Activated naive CD4-positive, alpha-beta T cell treated with anti-CD3 and anti-CD28 coated beads, Interleukin-2, amount 10 ng/mL, durations not matched to agents 7 days and 5 days (primary cell): ENCODE measurements at regions of chr12 and their contacts with region 1.

Region 1: DNA sequence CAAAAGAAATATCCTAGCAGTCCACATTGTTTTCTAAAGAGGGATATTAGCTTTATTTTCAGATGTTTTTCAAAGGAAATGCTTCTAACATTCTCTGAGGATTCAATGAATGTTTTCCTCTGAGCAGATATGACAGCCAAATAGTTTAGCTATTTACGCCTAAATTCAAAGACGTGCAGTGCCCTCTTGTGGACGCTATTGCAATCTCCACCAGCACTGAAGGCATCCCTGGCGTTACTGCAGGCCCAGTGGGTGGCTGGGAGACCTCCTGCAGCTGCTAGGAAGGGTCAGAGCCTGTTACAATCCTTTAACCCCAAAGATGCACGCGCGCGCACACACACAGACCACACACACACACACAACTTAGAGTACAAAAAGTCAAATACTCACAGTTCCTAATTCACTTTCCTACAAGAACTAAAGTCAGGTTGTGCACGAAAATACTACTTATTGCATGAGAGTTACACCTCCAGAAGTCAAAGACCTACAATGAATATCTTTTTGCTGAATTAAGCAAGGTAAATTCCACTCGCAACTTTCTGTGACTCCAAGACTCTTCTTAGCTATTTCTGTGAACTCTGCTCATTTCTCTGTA is 589.3 kb upstream of the TMEM132C start:
- DNase-seq: peak; percentile 69
- H3K4me3 Mint-ChIP-seq: no peak overlapping the region
- H3K27ac Mint-ChIP-seq: no peak overlapping the region
- H3K4me1 Mint-ChIP-seq: no peaks in the 10 kb centered on the region
- H3K27me3 Mint-ChIP-seq: no peaks in the 10 kb centered on the region

Region 2: DNA sequence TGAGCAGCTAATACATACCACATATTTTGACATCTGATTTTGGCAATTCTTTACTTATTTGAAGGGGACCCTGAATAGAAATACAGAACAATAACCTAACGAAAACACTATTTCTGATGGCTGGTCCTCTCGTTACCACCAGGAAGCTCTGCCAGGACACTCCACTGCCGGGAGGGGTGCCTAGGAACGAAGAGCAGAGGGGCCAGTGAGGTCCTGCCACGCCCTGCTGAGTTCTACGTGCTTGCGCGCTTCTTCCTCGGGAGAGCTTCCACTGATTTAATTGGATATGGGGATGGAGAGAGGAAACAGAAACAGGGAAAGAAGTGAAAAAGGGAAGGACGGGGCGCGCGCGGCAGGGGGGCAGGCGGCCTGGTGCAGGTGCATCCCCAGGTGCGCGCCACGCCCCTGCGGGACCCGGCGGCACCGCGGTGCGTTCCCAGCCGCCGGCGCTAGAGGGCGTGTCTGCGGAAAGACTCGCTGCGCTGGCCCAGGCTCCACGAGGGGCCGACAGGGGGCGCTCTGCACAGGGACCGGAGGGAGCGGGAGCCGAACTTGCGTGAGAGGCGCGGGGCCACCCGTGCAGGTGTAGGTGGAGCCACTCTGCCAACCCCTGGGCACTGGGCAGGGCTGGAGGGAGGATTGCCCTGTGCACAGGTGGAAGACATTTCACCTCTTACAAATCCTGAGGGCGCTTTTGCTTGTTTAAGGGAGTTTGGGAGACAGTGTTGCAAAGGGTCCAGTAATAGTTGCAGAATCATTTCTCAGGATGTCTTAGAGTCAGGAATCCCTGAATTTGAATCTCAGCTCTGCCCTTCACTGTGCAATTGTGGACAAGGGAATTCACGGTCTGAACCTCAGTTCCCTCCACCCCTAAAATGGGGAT is 397.0 kb before region 1 on chr12:
- CTCF ChIA-PET with region 1: interaction called, 20 read pairs
- DNase-seq: peak; percentile 77
- H3K4me3 Mint-ChIP-seq: no peak overlapping the region
- H3K27ac Mint-ChIP-seq: peak overlapping the region; percentile 69
- H3K4me1 Mint-ChIP-seq: no peaks in the 10 kb centered on the region
- H3K27me3 Mint-ChIP-seq: peaks cover 11% of the 10 kb centered on the region

Region 3: DNA sequence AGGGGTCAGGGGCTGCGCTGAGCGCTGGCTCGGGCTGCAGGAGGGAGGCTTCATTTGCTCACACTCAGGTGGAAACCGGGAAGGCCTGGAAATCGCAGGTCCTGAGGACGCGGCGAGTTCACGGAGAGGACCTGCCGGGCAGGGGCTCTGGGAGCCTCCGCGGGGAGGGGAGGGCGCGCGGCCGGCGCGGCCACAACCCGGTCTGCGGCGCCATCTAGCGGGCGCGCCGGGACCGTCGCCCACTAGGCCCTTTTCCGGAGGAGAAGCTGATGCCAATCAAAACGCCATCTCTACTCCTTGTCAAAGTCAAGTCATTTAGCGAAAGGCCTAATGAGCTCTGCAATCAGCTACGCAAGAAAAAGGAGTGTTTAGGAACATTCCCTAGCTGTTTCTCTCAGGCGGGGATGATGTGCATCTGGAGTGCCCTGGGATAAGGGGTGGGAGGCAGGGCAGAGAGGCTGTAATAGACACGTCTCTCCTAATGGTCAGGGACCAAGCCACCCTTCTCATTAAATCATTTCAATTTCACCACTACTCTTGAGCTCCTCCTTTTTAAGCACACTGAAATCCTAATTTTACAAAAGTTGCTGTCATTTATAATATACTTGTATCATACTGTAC is 296.5 kb before region 1 on chr12:
- CTCF ChIA-PET with region 1: interaction called, 20 read pairs
- DNase-seq: peak; percentile 50
- H3K4me3 Mint-ChIP-seq: no peak overlapping the region
- H3K27ac Mint-ChIP-seq: no peak overlapping the region
- H3K4me1 Mint-ChIP-seq: no peaks in the 10 kb centered on the region
- H3K27me3 Mint-ChIP-seq: no peaks in the 10 kb centered on the region

Region 4: DNA sequence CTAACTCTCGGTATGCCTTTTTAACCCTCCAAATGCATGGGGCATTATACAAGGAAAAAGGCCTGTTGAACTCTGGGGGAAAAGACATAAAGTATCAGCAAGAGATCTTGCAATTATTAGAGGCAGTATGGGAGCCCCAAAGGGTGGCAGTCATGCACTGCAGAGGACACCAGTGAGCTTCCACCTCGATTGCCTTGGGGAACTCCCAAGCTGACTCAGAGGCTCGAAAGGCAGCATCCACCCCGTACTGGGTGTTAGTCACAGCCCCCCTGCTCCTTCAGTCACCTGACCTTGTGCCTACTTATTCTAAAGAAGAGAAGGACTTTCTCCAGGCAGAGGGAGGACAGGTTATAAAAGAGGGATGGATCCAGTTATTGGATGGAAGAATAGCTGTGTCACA is 192.1 kb before region 1 on chr12:
- CTCF ChIA-PET with region 1: interaction called, 50 read pairs
- DNase-seq: peak; percentile 25
- H3K4me3 Mint-ChIP-seq: no peak overlapping the region
- H3K27ac Mint-ChIP-seq: no peak overlapping the region
- H3K4me1 Mint-ChIP-seq: no peaks in the 10 kb centered on the region
- H3K27me3 Mint-ChIP-seq: no peaks in the 10 kb centered on the region

Region 5: GRCh38 chr12:127667131-127667685 is 10.4 kb before region 1 on chr12:
- CTCF ChIA-PET with region 1: interaction called, 15 read pairs
- DNase-seq: no peak
- H3K4me3 Mint-ChIP-seq: no peak overlapping the region
- H3K27ac Mint-ChIP-seq: no peak overlapping the region
- H3K4me1 Mint-ChIP-seq: no peaks in the 10 kb centered on the region
- H3K27me3 Mint-ChIP-seq: no peaks in the 10 kb centered on the region

Region 6: GRCh38 chr12:127696963-127697362 is 19.3 kb after region 1 on chr12:
- CTCF ChIA-PET with region 1: no interaction called
- DNase-seq: no peak
- H3K4me3 Mint-ChIP-seq: no peak overlapping the region
- H3K27ac Mint-ChIP-seq: no peak overlapping the region
- H3K4me1 Mint-ChIP-seq: no peaks in the 10 kb centered on the region
- H3K27me3 Mint-ChIP-seq: no peaks in the 10 kb centered on the region

Region 7: GRCh38 chr12:127742231-127742630 is 64.6 kb after region 1 on chr12:
- CTCF ChIA-PET with region 1: no interaction called
- DNase-seq: no peak
- H3K4me3 Mint-ChIP-seq: no peak overlapping the region
- H3K27ac Mint-ChIP-seq: no peak overlapping the region
- H3K4me1 Mint-ChIP-seq: no peaks in the 10 kb centered on the region
- H3K27me3 Mint-ChIP-seq: no peaks in the 10 kb centered on the region

Region 8: GRCh38 chr12:127770118-127770517 is 92.5 kb after region 1 on chr12:
- CTCF ChIA-PET with region 1: no interaction called
- DNase-seq: no peak
- H3K4me3 Mint-ChIP-seq: no peak overlapping the region
- H3K27ac Mint-ChIP-seq: no peak overlapping the region
- H3K4me1 Mint-ChIP-seq: no peaks in the 10 kb centered on the region
- H3K27me3 Mint-ChIP-seq: no peaks in the 10 kb centered on the region